HEK293 (cell line): ENCODE measurements at regions of chr13 and their contacts with region 1.

Region 1: GRCh38 chr13:112443995-112444860 is 68.1 kb downstream of the SPACA7 start:
- H3K4me3 ChIP-seq: no peak overlapping the region
- H3K27ac ChIP-seq: no peak overlapping the region
- H3K4me1 ChIP-seq: no peaks in the 10 kb centered on the region
- CTCF ChIP-seq: no peak

Region 2: GRCh38 chr13:111474136-111475002 is 969.9 kb before region 1 on chr13:
- CTCF ChIA-PET with region 1: interaction called, 22 read pairs
- POLR2A ChIA-PET with region 1: no interaction called
- H3K4me3 ChIP-seq: no peak overlapping the region
- H3K27ac ChIP-seq: no peak overlapping the region
- H3K4me1 ChIP-seq: no peaks in the 10 kb centered on the region
- CTCF ChIP-seq: no peak

Region 3: GRCh38 chr13:112102243-112102642 is 342.0 kb before region 1 on chr13:
- CTCF ChIA-PET with region 1: interaction called, 23 read pairs
- POLR2A ChIA-PET with region 1: no interaction called
- H3K4me3 ChIP-seq: no peak overlapping the region
- H3K27ac ChIP-seq: no peak overlapping the region
- H3K4me1 ChIP-seq: peaks cover 4% of the 10 kb centered on the region
- CTCF ChIP-seq: no peak